ENCODE measurements at regions of chr2 and their contacts with region 1.

Region 1: GRCh38 chr2:118855451-118856279 is 8.2 kb upstream of the EN1 start:
- DNase-seq: peak; percentile 68
- H3K4me3 ChIP-seq: no peak overlapping the region
- H3K27ac ChIP-seq: no peak overlapping the region
- H3K4me1 ChIP-seq: peaks cover 2% of the 10 kb centered on the region
- H3K27me3 ChIP-seq: peaks cover 95 to 98% of the 10 kb centered on the region in 2 experiments
- CTCF ChIP-seq: peak; percentile 81 to 90
- POLR2A ChIP-seq: no peak

Region 2: DNA sequence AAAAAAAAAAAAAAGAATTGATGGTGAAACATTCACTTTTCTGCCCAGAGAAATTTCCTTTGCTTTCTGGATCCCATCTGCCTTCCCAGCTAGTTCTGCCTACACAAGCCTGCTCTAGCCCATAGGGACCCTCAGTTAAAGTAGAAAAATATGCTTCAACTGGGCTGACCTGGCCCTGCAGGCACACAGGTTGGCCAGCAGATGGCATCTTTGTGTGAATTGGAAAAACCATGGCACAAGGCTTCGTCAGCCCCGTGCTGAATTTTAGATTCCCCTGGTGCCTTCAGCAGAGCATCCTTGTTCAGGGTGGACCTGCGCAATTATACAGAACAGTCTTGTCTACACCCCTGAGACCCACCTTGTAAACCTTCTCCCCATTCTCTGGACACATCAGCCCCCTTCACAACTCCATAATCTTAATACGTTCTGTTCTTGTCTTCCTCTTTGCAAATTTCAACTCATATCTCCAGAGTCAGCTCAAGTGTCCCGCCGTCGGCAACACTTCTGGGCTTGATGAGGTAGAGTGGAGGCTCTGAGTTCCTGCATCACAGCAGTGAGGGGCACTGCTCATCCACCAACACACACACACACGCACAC is 652.9 kb before region 1 on chr2:
- CTCF ChIA-PET with region 1: interaction called, 16 read pairs
- POLR2A ChIA-PET with region 1: no interaction called
- dilution Hi-C with region 1: no loop called
- intact Hi-C with region 1: loop called (anchors 1 kb)
- DNase-seq: peak; percentile 43
- H3K4me3 ChIP-seq: no peak overlapping the region
- H3K27ac ChIP-seq: no peak overlapping the region
- H3K4me1 ChIP-seq: no peaks in the 10 kb centered on the region
- H3K27me3 ChIP-seq: peaks cover 2 to 11% of the 10 kb centered on the region in 2 experiments
- CTCF ChIP-seq: peak; percentile 86 to 92
- POLR2A ChIP-seq: no peak

Region 3: DNA sequence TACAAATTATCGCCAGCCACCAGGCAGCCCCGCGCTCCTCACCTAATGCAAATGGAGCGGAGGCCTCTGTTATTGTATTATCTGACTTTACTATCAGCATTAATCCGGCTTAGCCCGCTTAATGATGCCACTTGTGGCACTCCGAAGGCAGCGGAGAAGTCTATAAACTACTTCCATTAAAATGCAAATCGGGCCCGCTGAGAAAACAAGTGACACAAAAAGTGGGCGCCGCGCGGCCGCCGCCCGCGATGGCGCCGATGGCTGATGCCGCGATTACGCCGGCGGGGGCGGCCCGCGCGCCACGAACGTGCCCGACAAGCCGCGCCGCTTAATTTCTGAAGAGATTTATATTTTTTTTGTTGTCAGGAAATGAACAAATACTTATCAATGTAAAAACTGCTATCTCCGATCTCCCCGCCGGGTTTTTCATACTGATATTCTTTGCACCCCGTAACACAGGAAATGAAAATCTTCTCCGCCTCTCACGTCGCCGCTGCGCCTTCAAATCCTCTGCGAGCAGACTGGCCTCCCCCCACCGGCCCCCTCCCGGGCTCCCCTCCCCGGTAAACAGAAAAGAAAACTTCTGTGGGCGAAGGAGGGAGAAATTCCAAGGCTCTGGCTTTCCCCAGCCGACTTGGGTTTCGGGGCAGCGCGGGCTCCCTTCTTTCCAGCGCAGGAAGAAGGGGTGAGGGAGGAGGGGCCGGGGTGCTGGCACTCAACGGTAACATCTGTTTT is 545.6 kb before region 1 on chr2:
- CTCF ChIA-PET with region 1: interaction called, 4 read pairs
- POLR2A ChIA-PET with region 1: no interaction called
- dilution Hi-C with region 1: no loop called
- intact Hi-C with region 1: loop called (anchors 5 kb)
- DNase-seq: peak; percentile 48
- H3K4me3 ChIP-seq: peak overlapping the region; percentile 52 to 89 (median 85)
- H3K27ac ChIP-seq: no peak overlapping the region
- H3K4me1 ChIP-seq: peaks cover 6% of the 10 kb centered on the region
- H3K27me3 ChIP-seq: no peaks in the 10 kb centered on the region
- CTCF ChIP-seq: no peak
- POLR2A ChIP-seq: no peak

Region 4: DNA sequence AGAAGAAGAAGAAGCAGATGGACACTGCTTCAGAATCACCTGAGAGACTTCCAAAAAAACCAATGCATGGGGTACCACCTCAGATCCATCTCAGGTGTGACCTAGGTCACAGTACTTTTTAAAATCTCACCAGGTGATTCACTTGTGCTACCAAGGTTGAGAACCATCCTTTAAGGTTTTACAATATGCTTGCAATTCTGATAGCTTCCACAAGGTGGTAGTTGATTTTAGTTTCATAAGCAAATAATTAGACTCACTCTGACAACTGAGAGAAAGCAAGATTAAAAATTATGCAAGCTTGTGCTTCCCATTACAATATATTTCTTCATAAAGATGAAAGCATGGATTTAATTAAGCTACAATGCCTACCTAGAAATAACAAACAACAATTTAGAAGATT is 363.3 kb before region 1 on chr2:
- CTCF ChIA-PET with region 1: interaction called, 30 read pairs
- POLR2A ChIA-PET with region 1: no interaction called
- dilution Hi-C with region 1: no loop called
- intact Hi-C with region 1: no loop called
- DNase-seq: peak; percentile 5
- H3K4me3 ChIP-seq: no peak overlapping the region
- H3K27ac ChIP-seq: no peak overlapping the region
- H3K4me1 ChIP-seq: no peaks in the 10 kb centered on the region
- H3K27me3 ChIP-seq: no peaks in the 10 kb centered on the region
- CTCF ChIP-seq: no peak
- POLR2A ChIP-seq: no peak

Region 5: DNA sequence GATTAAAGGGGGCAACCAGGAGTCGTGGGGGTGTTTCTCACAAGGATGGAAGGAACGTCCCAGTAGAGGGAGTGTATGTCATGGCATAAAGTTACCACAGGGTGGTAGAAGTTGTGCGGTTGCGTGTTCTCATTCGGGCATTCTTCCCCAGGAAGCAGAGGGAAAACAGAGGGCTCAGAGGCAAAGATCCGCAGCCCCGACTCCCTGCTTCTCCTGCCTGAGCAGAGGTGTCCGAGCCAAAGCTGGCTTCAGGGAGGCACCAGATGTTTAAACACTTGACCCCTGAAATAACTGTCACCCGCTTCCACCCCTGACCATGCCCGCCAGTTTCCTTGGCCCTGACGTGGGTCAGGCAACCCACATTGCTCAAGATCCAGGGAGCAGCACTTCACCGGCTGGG is 91.9 kb before region 1 on chr2:
- CTCF ChIA-PET with region 1: no interaction called
- POLR2A ChIA-PET with region 1: no interaction called
- dilution Hi-C with region 1: no loop called
- intact Hi-C with region 1: loop called (anchors 1 kb)
- DNase-seq: no peak
- H3K4me3 ChIP-seq: no peak overlapping the region
- H3K27ac ChIP-seq: no peak overlapping the region
- H3K4me1 ChIP-seq: no peaks in the 10 kb centered on the region
- H3K27me3 ChIP-seq: no peaks in the 10 kb centered on the region
- CTCF ChIP-seq: no peak
- POLR2A ChIP-seq: no peak

Region 6: GRCh38 chr2:119491808-119492533 is 636.3 kb after region 1 on chr2:
- CTCF ChIA-PET with region 1: no interaction called
- POLR2A ChIA-PET with region 1: no interaction called
- dilution Hi-C with region 1: no loop called
- intact Hi-C with region 1: no loop called
- DNase-seq: peak; percentile 49
- H3K4me3 ChIP-seq: no peak overlapping the region
- H3K27ac ChIP-seq: no peak overlapping the region
- H3K4me1 ChIP-seq: peaks cover 3% of the 10 kb centered on the region
- H3K27me3 ChIP-seq: peaks cover 0 to 3% of the 10 kb centered on the region in 2 experiments
- CTCF ChIP-seq: no peak
- POLR2A ChIP-seq: no peak

Measured in endothelial cell of umbilical vein (primary cell).